ENCODE measurements at regions of chr1 and their contacts with region 1.

Region 1: DNA sequence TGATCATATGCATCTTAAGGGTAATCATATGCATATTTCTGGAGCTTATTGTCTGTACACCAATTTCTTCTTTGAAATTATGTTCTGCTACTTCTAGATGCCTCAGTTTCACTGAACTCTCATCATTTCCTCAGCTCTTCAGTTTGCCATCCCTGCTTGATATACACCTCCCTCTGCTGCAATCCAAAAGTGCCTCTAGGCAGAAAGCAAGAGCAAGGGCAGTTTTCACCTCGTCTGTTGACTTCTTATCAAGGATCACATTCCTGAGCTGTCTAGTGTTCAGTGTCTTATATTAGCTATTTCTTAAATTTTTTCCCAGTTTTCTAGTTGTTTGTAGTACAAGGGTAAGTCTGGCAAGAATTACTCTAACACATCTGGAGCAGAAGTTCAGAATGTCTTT is 354.4 kb upstream of the DAB1 start:
- DNase-seq: no peak
- H3K4me3 Mint-ChIP-seq: no peak overlapping the region
- H3K27ac Mint-ChIP-seq: no peak overlapping the region
- H3K4me1 Mint-ChIP-seq: no peaks in the 10 kb centered on the region
- H3K27me3 Mint-ChIP-seq: no peaks in the 10 kb centered on the region

Region 2: GRCh38 chr1:57707631-57708030 is 70.6 kb before region 1 on chr1:
- intact Hi-C with region 1: loop called (anchors 2 kb)
- DNase-seq: no peak
- H3K4me3 Mint-ChIP-seq: no peak overlapping the region
- H3K27ac Mint-ChIP-seq: no peak overlapping the region
- H3K4me1 Mint-ChIP-seq: no peaks in the 10 kb centered on the region
- H3K27me3 Mint-ChIP-seq: no peaks in the 10 kb centered on the region

Measured in activated CD4-positive, alpha-beta T cell treated with anti-CD3 and anti-CD28 coated beads, Interleukin-2, amount 10 ng/mL, durations not matched to agents 24 days and 14 days (primary cell).